ENCODE measurements at regions of chr11 and their contacts with region 1.

Region 1: GRCh38 chr11:40029391-40029790 is 1430.1 kb downstream of the LRRC4C start:
- DNase-seq: peak; percentile 10
- H3K4me3 ChIP-seq: peak overlapping the region in 2 of 4 donors; percentile 6 to 37
- H3K27ac ChIP-seq: no peak overlapping the region
- H3K4me1 ChIP-seq: no peaks in the 10 kb centered on the region
- H3K27me3 ChIP-seq: no peaks in the 10 kb centered on the region
- CTCF ChIP-seq: no peak
- EP300 ChIP-seq: no peak
- POLR2A ChIP-seq: no peak

Region 2: DNA sequence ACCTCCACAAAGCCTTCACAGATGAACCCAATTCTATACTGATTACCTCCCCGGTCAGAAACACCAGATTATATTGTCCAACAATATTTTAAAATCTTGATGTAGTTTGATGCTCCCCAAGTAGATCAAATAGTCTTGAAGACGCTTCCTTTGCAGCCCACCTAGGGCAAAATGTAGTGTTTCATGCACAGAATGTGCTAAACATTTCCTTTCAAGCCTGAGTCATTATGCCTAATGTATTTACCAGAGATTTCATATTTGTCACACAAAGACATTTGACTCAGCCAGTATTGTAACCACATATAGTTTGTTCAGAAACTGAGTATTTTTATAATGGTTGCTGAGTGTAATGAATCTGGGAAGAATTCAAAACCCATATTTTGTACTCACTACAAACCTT is 33.2 kb after region 1 on chr11:
- in situ Hi-C with region 1: no loop called
- intact Hi-C with region 1: no loop called
- DNase-seq: no peak
- H3K4me3 ChIP-seq: no peak overlapping the region
- H3K27ac ChIP-seq: no peak overlapping the region
- H3K4me1 ChIP-seq: no peaks in the 10 kb centered on the region
- H3K27me3 ChIP-seq: no peaks in the 10 kb centered on the region
- CTCF ChIP-seq: no peak
- EP300 ChIP-seq: no peak
- POLR2A ChIP-seq: no peak

Region 3: DNA sequence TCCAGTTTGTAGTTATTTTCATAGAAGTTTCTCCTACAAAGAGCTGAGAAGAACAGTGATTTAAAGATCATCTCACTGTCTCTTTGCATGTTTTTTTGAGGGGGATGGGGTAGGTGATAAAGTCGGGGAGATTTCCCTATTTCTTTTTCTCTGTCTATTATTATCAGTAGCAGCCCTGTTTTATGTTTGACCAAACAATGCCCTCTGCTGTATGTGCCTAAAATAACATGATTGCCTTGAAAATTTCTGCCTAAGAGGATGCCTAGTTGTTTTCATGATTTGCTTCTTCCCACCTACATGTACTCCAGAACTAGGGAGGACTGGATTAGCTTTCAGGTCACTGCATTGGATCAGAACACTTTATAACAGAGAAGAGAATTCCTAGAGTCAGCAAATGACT is 99.9 kb after region 1 on chr11:
- in situ Hi-C with region 1: loop called in 1 of 4 experiments (anchors 25 kb)
- intact Hi-C with region 1: no loop called
- DNase-seq: no peak
- H3K4me3 ChIP-seq: no peak overlapping the region
- H3K27ac ChIP-seq: no peak overlapping the region
- H3K4me1 ChIP-seq: no peaks in the 10 kb centered on the region
- H3K27me3 ChIP-seq: no peaks in the 10 kb centered on the region
- CTCF ChIP-seq: no peak
- EP300 ChIP-seq: no peak
- POLR2A ChIP-seq: no peak

Measured in transverse colon (tissue), 4 donors.